Kidney (tissue), 22 donors: ENCODE measurements at regions of chr1 and their contacts with region 1.

Region 1: DNA sequence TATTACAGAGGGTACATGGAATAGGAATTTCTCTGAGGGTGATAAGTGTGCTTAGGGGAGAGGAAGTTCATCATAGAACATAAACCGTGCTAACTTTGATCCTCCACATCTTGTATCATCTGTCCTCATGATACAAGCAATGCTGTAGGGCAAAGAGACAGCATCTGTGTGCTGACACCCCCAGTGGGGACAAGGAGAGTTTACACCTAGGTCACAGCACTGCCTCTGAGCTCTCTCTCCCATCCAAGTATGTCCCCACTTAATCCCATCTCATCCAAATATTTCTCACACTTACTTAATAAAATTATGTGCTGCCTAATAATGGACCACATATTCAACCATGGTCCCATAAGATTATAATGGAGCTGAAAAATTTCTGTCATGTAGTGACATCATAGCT is 4.3 kb upstream of the TEDDM1 start:
- DNase-seq: no peak
- H3K4me3 ChIP-seq: no peak overlapping the region
- H3K27ac ChIP-seq: no peak overlapping the region
- H3K4me1 ChIP-seq: no peaks in the 10 kb centered on the region
- H3K27me3 ChIP-seq: no peaks in the 10 kb centered on the region
- CTCF ChIP-seq: no peak

Region 2: GRCh38 chr1:182084487-182085316 is 320.1 kb before region 1 on chr1:
- intact Hi-C with region 1: loop called (anchors 10 kb)
- DNase-seq: peak; percentile 87 to 91 (median 89)
- H3K4me3 ChIP-seq: peak overlapping the region in 2 of 3 donors; percentile 26 to 32
- H3K27ac ChIP-seq: no peak overlapping the region
- H3K4me1 ChIP-seq: peaks cover 0 to 4% (median 0%) of the 10 kb centered on the region in 3 donors
- H3K27me3 ChIP-seq: no peaks in the 10 kb centered on the region
- CTCF ChIP-seq: peak; percentile 91

Region 3: DNA sequence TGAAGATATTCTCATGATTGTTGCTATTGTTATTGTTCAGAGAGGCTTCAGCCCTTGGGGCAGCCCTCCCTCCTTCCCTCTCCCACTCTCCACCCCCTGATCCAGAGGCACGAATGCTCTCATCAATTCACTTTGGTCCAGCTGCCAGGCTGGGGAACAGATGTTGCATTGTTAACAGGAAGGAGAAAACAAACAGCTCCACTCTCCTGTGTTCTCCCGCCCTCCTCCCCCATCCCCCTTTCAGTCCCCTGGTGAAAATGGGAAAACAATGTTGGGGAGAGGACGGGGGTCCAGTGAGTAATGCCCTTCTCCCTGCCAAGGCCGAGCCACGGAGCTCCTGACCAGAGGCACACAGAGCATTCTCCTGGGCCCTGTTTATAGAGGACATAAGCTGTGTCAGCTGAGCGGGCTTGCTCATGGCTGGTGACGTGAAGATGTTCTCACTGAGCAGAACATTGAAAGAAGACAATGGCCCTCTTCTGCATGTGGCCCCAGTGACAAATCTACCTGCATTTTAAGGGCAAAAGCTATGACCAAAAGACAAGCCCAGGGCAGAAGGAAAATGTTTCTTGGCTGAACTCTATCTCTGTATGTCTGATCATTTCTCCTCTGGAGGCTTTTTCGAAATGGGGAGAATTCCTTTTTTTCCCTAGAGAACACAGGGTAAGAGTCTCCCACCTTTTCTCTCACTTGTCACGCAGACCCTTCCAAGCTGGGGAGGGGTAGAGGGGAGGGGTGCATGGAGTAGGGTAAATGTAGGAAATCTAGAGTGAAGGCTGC is 124.9 kb before region 1 on chr1:
- intact Hi-C with region 1: no loop called
- DNase-seq: peak in 3 of 5 donors; percentile 11 to 43 (median 37)
- H3K4me3 ChIP-seq: no peak overlapping the region
- H3K27ac ChIP-seq: no peak overlapping the region
- H3K4me1 ChIP-seq: no peaks in the 10 kb centered on the region
- H3K27me3 ChIP-seq: no peaks in the 10 kb centered on the region
- CTCF ChIP-seq: no peak